ENCODE measurements at regions of chr11 and their contacts with region 1.

Region 1: GRCh38 chr11:1882519-1883238 is 9.0 kb downstream of the PRR33 start:
- DNase-seq: peak; percentile 76
- H3K4me3 Mint-ChIP-seq: no peak overlapping the region
- H3K27ac Mint-ChIP-seq: peak overlapping the region; percentile 41
- H3K4me1 Mint-ChIP-seq: peaks cover 33% of the 10 kb centered on the region
- H3K27me3 Mint-ChIP-seq: no peaks in the 10 kb centered on the region

Region 2: GRCh38 chr11:1796413-1797011 is 86.2 kb before region 1 on chr11:
- CTCF ChIA-PET with region 1: no interaction called
- POLR2A ChIA-PET with region 1: no interaction called
- DNase-seq: no peak
- H3K4me3 Mint-ChIP-seq: no peak overlapping the region
- H3K27ac Mint-ChIP-seq: no peak overlapping the region
- H3K4me1 Mint-ChIP-seq: peaks cover 13% of the 10 kb centered on the region
- H3K27me3 Mint-ChIP-seq: peaks cover 9% of the 10 kb centered on the region

Region 3: GRCh38 chr11:1845561-1846452 is 36.9 kb before region 1 on chr11:
- CTCF ChIA-PET with region 1: interaction called, 20 read pairs
- POLR2A ChIA-PET with region 1: no interaction called
- DNase-seq: peak; percentile 41
- H3K4me3 Mint-ChIP-seq: peak overlapping the region; percentile 62
- H3K27ac Mint-ChIP-seq: peak overlapping the region; percentile 90
- H3K4me1 Mint-ChIP-seq: peaks cover 76% of the 10 kb centered on the region
- H3K27me3 Mint-ChIP-seq: no peaks in the 10 kb centered on the region

Region 4: DNA sequence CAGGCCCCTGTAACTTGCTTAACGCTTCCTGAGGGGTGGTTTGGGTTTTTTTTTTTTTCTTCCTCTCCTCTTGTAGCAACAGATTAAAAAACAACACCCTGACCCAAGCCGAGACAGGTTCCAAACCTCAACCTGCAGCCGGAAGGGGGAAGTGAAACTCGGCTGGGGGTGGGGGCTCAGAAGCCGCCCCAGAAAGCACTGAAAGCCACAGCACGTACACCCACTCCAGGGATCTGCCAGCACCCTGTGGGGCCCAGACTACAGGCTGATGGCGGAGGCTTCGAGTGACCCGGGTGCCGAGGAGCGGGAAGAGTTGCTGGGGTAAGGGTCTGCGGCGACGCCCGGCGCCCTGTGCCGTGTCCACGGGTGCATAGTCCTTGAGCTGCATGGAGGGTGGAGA is 29.8 kb before region 1 on chr11 and contains the start of gene LSP1:
- CTCF ChIA-PET with region 1: interaction called, 20 read pairs
- POLR2A ChIA-PET with region 1: interaction called, 3 read pairs
- DNase-seq: peak; percentile 92
- H3K4me3 Mint-ChIP-seq: peak within 1 kb of the TSS; percentile 99
- H3K27ac Mint-ChIP-seq: peak within 1 kb of the TSS; percentile 96
- H3K4me1 Mint-ChIP-seq: peaks cover 61% of the 10 kb centered on the region
- H3K27me3 Mint-ChIP-seq: no peaks in the 10 kb centered on the region
- total RNA-seq, gene LSP1: 668 to 687 TPM

Measured in activated CD4-positive, alpha-beta T cell treated with anti-CD3 and anti-CD28 coated beads, Interleukin-2, amount 10 ng/mL, durations not matched to agents 7 days and 5 days (primary cell).